Dorsolateral prefrontal cortex (tissue), 120 donors: ENCODE measurements at regions of chr17 and their contacts with region 1.

Region 1: DNA sequence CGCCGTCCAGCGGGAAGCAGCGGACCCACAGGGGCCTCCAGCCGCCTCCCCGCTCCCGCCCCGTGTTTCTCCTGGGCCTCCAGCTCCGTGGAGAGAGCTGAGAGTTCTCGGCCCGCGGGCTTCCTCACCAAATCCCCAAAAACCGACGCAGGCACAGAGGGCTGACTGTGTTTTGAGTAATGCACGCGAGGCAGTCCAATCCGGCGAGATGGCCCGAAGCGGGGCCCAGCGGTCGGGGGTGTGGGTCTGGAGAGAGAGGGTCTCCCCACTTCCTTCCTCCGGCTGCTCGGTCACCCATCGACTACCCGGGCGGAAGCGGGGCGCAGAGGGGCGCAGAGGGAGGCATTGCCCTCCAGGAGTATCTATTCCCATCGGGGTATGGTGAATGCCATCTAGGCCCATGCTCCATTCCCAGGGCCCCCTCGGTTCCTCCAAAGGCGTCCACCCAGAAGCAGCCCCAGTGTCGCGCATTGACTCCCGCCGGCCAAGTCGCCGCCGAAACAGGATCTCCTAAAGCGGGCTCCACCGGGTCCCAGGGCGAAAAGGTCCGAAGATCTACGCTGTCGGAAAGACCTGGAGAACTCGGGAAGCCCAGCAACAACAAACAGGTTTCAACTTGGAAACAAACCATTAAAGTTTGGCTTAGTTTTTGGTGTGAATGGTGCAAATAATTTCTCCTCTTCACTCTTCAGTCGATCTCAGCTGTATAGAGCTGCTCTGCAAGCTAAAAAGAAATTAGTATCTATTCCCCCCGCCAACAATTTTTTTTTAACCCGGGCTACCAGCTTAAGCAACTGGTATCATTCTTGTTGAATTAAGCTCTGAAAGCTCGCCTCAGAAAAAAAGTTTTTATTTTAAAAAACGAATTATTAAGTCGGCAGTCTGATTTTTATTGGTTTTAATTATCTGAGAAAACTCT is 19.2 kb upstream of the HOXB13 start:
- DNase-seq: peak in 1 of 10 donors; percentile 23
- H3K4me3 ChIP-seq: no peak overlapping the region
- H3K27ac ChIP-seq: no peak overlapping the region
- H3K27me3 ChIP-seq: peaks cover 21 to 100% (median 98%) of the 10 kb centered on the region in 45 donors
- CTCF ChIP-seq: no peak

Region 2: GRCh38 chr17:48586355-48587258 is 161.1 kb before region 1 on chr17:
- intact Hi-C with region 1: no loop called
- DNase-seq: no peak
- H3K4me3 ChIP-seq: peak overlapping the region in 3 of 59 donors; percentile 24 to 63 (median 48)
- H3K27ac ChIP-seq: no peak overlapping the region
- H3K27me3 ChIP-seq: peaks cover 36 to 100% (median 100%) of the 10 kb centered on the region in 45 donors
- CTCF ChIP-seq: no peak

Region 3: DNA sequence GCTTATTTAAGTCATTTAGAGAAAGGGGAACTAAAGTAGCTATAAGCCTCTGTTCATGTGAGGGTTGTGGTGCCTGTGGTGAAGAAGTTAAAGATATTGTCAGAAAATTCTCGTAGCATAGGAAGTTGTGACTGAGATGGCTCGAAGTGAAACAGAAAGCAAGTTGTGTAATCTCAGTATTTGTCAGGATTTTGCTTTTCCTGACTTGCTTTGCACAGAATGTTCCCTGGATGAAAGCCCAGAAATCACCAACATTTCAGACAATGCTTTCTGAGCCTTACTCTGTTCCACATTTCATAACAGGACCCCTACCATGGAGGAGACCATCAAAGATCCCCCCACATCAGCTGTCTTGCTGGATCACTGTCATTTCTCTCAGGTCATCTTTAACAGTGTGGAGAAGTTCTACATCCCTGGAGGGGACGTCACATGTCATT is 93.7 kb after region 1 on chr17:
- intact Hi-C with region 1: no loop called
- DNase-seq: no peak
- H3K4me3 ChIP-seq: peak overlapping the region in 57 of 59 donors; percentile 5 to 68 (median 40)
- H3K27ac ChIP-seq: peak overlapping the region; percentile 52 to 100 (median 94)
- H3K27me3 ChIP-seq: no peaks in the 10 kb centered on the region
- CTCF ChIP-seq: peak in 6 of 56 donors; percentile 5 to 24 (median 12)

Region 4: GRCh38 chr17:48997083-48997826 is 249.6 kb after region 1 on chr17 and contains the start of gene IGF2BP1:
- intact Hi-C with region 1: loop called in 1 of 2 experiments (anchors 10 kb)
- DNase-seq: no peak
- H3K4me3 ChIP-seq: peak within 1 kb of the TSS in 7 of 59 donors; percentile 0 to 28 (median 14)
- H3K27ac ChIP-seq: no peak within 1 kb of the TSS
- H3K27me3 ChIP-seq: peaks cover 29 to 100% (median 98%) of the 10 kb centered on the region in 45 donors
- CTCF ChIP-seq: no peak
- total RNA-seq, gene IGF2BP1: not detected